Activated CD4-positive, alpha-beta T cell treated with anti-CD3 and anti-CD28 coated beads, Interleukin-2, amount 10 ng/mL, durations not matched to agents 24 days and 14 days (primary cell): ENCODE measurements at regions of chr16 and their contacts with region 1.

Region 1: GRCh38 chr16:66552286-66553177 is at the start of gene CKLF:
- DNase-seq: peak; percentile 98
- H3K4me3 Mint-ChIP-seq: peak within 1 kb of the TSS; percentile 91
- H3K27ac Mint-ChIP-seq: peak within 1 kb of the TSS; percentile 95
- H3K4me1 Mint-ChIP-seq: peaks cover 68% of the 10 kb centered on the region
- H3K27me3 Mint-ChIP-seq: peaks cover 2% of the 10 kb centered on the region
- total RNA-seq, gene CKLF: 145 and 146 TPM in 2 replicates

Region 2: GRCh38 chr16:66521951-66522771 is 30.4 kb before region 1 on chr16:
- intact Hi-C with region 1: loop called (anchors 1 kb)
- DNase-seq: peak; percentile 96
- H3K4me3 Mint-ChIP-seq: peak overlapping the region; percentile 83
- H3K27ac Mint-ChIP-seq: peak overlapping the region; percentile 97
- H3K4me1 Mint-ChIP-seq: peaks cover 80% of the 10 kb centered on the region
- H3K27me3 Mint-ChIP-seq: no peaks in the 10 kb centered on the region

Region 3: DNA sequence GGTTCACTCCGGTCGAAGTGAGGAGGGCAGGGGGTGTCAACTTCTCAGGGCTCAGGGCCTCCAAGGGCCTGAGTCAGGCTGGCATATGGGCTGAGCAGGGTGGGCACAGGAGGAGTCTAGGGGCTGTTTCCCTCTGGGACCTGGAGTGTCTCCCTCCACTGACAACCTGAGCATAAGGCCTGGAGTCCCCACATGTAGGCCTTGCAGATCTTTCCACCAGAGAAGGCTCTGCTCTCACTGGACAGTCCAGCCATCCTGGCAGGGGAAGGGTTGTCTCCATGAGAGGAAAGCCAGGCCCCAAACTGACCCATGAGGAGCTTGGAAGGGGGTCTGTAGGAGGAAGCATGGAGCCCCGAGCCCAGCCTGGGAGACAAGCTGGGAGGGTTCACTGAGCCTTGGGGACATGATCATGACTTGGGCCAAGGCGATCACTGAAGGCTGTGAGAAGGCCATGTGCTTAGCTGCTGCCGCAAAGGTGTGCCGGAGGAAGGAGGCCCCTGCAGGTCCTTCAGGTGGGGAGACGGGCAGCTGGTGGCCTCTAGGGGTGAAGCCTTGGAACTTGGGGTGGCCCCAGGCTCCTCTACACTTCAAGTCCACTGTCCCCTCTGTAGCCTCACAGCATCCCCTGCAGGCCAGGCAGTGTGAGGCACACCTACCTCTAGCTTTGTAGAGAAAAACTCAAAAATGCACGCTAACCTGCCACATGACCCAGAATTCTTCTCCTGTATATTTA is 36.6 kb after region 1 on chr16:
- intact Hi-C with region 1: loop called (anchors 2 kb)
- DNase-seq: peak; percentile 89
- H3K4me3 Mint-ChIP-seq: peak overlapping the region; percentile 76
- H3K27ac Mint-ChIP-seq: peak overlapping the region; percentile 56
- H3K4me1 Mint-ChIP-seq: peaks cover 34% of the 10 kb centered on the region
- H3K27me3 Mint-ChIP-seq: no peaks in the 10 kb centered on the region

Region 4: DNA sequence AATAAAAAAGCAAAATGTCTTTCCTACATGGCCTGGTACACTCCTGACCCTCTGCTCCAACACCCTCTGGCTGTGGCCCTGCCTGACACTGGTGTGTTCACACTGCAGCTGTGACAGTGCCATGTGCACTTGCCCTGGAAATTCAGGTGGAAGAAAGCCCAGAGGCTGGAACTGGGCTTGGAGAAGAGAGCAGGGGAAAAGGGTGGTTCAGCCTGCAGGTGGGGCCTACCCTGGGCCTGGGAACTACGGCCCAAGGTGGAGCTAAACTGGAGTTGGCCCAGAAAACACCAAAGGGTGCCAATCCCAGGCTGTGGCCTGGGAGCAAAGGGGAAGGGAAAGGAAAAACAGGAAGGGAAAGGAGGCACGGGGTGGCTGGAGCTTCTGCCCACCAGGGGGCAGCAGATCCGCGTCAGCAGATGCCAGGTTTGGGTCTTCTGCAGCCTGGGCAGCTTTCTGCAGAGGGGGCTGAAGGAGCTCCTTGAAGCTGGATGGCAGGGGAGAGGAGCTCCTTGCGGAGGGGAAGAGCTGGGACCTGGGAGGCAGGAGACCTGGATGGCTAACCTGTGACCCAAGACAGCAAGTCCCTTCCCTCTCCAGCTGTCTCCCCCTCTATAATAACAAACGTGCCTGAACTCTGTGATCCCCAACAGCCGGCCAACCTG is 994.4 kb after region 1 on chr16:
- intact Hi-C with region 1: no loop called
- DNase-seq: peak; percentile 92
- H3K4me3 Mint-ChIP-seq: peak overlapping the region; percentile 58
- H3K27ac Mint-ChIP-seq: peak overlapping the region; percentile 89
- H3K4me1 Mint-ChIP-seq: peaks cover 35% of the 10 kb centered on the region
- H3K27me3 Mint-ChIP-seq: no peaks in the 10 kb centered on the region